ENCODE measurements at regions of chr12 and their contacts with region 1.

Region 1: DNA sequence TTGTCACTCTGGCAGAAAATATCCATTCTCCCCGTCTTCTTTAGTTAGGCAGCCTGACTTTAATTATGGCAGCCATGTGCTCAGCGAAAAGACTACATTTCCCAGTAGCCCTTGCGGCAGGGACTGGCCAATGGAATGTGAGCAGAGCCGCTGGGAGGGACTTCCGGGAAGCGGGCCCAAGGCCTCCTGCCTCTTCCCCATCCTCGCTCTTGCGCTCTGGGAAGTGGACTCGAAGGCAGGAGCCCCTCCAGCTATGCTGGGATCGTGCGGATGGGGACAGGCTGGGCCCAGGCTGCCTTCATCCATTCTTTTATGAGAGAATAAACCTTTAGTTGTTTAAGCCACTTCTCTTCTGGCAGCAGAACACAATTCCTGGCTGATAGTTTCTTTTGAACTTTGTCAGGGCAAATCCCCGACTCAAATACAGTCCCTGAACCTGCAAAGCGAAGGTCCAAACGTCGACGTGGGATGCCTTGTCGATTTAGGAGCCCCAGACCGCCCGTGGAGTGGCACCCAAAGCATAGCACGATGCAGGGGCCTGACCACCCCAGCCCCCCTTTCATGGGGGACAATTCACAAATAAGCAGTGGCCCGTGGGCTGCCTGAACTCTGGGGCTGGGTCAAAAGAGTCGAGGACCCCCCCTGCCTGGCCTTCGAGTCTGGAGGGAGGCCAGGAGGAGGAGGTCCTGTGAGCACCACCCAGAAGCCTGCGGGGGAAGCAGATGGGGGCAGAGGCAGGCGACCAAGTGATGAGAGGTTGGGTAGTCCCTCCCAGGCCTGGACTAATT is 15.6 kb upstream of the LRTM2 start:
- DNase-seq: peak; percentile 69 to 86 (median 74)
- H3K4me3 ChIP-seq: no peak overlapping the region
- H3K27ac ChIP-seq: no peak overlapping the region
- H3K4me1 ChIP-seq: no peaks in the 10 kb centered on the region
- H3K27me3 ChIP-seq: no peaks in the 10 kb centered on the region
- CTCF ChIP-seq: no peak
- EP300 ChIP-seq: no peak
- POLR2A ChIP-seq: no peak

Region 2: GRCh38 chr12:1932264-1932777 is 127.6 kb after region 1 on chr12:
- intact Hi-C with region 1: loop called (anchors 5 kb)
- DNase-seq: peak in 1 of 5 donors; percentile 24
- H3K4me3 ChIP-seq: no peak overlapping the region
- H3K27ac ChIP-seq: no peak overlapping the region
- H3K4me1 ChIP-seq: peaks cover 6% of the 10 kb centered on the region
- H3K27me3 ChIP-seq: no peaks in the 10 kb centered on the region
- CTCF ChIP-seq: no peak
- EP300 ChIP-seq: no peak
- POLR2A ChIP-seq: no peak

Region 3: GRCh38 chr12:2049604-2050540 is 245.1 kb after region 1 on chr12:
- intact Hi-C with region 1: loop called in 1 of 4 experiments (anchors 10 kb)
- DNase-seq: no peak
- H3K4me3 ChIP-seq: no peak overlapping the region
- H3K27ac ChIP-seq: no peak overlapping the region
- H3K4me1 ChIP-seq: peaks cover 4% of the 10 kb centered on the region
- H3K27me3 ChIP-seq: no peaks in the 10 kb centered on the region
- CTCF ChIP-seq: no peak
- EP300 ChIP-seq: no peak
- POLR2A ChIP-seq: no peak